ENCODE measurements at regions of chr12 and their contacts with region 1.

Region 1: DNA sequence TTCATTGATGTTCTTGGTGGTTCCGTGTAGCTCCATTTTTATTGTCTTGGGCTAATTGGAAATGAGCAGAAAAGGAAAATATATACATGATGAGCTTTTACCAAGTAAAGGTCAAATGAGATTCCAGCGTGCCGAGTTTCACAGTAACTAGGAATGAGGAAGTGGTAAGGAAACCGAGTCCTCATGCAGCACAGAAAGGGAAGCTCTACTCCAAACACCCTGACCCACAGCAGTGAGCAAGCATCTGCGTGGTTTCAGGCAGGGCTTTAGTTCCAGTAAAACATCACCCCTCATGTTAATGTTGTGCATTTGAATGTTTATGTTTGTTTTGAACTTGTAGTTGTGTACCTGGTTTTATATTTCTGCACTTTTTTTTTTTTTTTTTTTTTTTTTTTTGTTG is 208.0 kb downstream of the SLC41A2 start:
- DNase-seq: peak in 1 of 2 donors; percentile 65
- ATAC-seq: peak; percentile 17
- H3K4me3 ChIP-seq: no peak overlapping the region
- H3K27ac ChIP-seq: no peak overlapping the region
- H3K4me1 ChIP-seq: no peaks in the 10 kb centered on the region
- H3K27me3 ChIP-seq: no peaks in the 10 kb centered on the region

Region 2: GRCh38 chr12:104641862-104642261 is 108.2 kb before region 1 on chr12:
- intact Hi-C with region 1: no loop called
- DNase-seq: no peak
- ATAC-seq: peak; percentile 61
- H3K4me3 ChIP-seq: no peak overlapping the region
- H3K27ac ChIP-seq: no peak overlapping the region
- H3K4me1 ChIP-seq: no peaks in the 10 kb centered on the region
- H3K27me3 ChIP-seq: no peaks in the 10 kb centered on the region

Region 3: DNA sequence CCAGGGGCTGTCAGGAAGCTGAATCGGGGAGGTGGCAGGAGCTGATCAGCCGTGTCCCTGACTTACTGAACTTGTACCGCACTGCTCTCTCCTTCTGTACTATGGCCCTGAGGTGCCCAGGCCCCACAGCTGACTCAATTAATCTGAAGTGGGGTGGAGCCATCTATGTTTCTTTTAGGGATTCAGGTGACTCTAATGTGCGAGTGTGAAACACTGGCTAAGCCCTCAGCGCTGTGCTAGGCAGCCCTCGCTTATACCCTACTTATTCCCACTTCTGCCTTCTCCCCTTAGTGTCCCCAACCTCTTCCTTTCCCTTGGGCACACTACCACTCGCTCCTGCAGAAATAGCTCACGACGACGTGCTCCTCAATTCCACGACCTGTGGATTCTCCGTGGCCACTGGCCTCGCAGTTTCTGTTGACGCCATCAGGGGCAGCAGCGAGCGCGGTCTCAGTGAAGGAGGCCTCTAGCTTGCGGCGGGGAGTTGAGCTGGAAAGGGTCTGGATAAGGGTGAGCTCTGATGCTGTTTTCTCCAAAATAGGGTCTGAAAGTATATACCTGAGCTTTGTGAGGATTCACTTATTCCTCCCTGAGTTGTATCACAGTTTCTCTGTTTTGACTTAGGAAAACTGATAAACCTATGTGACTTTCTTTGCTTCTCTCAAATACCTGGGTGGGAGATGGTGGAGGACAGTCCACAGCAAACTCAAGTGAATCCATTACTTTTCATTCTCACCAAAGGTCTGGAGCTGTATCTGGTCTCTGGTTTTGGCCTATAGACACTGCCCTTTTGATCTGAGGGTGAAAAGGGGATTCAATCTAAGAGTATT is 40.5 kb after region 1 on chr12:
- intact Hi-C with region 1: loop called in 1 of 2 experiments (anchors 5 kb)
- DNase-seq: peak; percentile 53 to 87
- ATAC-seq: no peak
- H3K4me3 ChIP-seq: no peak overlapping the region
- H3K27ac ChIP-seq: no peak overlapping the region
- H3K4me1 ChIP-seq: peaks cover 0 to 2% of the 10 kb centered on the region in 2 donors
- H3K27me3 ChIP-seq: no peaks in the 10 kb centered on the region

Region 4: DNA sequence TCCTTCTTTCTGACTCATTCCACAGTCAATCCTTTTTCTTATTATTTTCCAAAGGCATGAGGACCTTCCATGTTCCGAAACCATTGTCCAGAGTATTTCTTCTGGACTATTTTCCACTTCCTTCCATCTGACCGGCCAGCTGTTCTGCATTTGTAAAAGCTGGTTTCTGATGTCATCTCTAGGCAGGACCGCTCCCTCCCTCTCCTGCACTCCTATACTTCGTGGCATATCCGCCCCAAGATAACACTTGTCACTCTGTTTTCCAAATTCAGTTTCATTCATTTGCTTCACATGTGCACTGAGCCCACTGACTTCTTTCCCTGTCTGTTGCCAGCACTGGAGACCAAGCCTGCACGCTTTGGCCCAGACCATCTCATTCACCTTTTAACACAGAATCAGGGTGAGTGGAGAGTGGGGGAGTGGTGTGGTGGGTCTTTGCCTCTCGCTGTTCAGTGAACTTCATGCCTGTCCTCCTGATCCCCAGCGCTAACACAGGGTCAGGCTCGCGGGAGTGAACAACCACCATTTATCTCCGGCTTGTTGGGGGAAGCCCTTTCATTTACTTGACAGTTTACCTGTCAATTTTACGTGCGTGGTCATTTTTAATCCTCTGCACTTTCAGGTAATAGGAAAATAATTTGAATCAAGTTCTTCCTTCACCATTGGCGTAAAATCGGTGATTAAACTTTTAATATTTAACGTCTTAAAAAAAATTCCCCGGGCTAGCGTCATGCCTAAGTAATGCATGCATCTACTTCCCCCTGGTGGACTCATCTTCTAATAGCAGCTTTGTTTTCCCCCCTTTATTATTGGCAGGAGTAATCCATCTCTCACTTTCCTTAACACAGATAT is 632.9 kb after region 1 on chr12:
- intact Hi-C with region 1: no loop called
- DNase-seq: no peak
- ATAC-seq: peak; percentile 89
- H3K4me3 ChIP-seq: peak overlapping the region in 1 of 2 donors; percentile 43
- H3K27ac ChIP-seq: no peak overlapping the region
- H3K4me1 ChIP-seq: no peaks in the 10 kb centered on the region
- H3K27me3 ChIP-seq: no peaks in the 10 kb centered on the region